Activated naive CD4-positive, alpha-beta T cell treated with anti-CD3 and anti-CD28 coated beads, Interleukin-2, amount 10 ng/mL, durations not matched to agents 7 days and 5 days (primary cell): ENCODE measurements at regions of chr15 and their contacts with region 1.

Region 1: DNA sequence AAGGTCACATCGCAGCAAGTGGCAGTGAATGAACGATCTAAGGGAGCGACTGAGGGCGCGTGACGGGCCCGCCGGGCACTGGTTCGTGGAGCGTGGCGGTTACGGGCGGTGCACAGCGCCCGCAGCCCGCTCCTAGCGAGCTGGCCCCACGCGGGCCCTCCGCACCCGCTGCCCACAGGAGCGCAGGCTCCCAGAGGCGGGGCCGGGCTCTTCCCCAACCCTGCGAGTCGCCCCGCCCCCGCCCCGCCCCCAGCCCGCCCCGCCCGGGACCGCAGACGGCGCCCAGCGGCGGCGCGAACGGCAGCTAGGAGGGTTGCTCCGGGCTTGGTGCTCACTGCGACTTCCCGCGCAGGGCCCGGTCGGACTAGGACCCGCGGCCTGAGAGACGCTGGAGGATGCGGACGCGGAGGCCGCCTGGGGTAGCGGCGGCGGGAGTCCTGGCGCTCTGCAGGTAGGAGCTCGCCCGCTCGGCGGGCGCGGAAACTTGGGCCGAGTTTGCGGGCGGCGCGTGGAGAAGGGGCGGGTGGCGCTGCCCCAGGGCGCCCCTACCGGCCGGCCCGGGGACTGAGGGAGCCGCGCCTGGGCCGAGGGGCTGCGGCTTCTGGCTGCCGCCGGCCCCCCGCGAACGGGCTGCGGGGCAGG is at the start of gene C15orf39:
- DNase-seq: peak; percentile 80
- H3K4me3 Mint-ChIP-seq: peak within 1 kb of the TSS; percentile 90
- H3K27ac Mint-ChIP-seq: peak within 1 kb of the TSS; percentile 95
- H3K4me1 Mint-ChIP-seq: peaks cover 59% of the 10 kb centered on the region
- H3K27me3 Mint-ChIP-seq: peaks cover 4% of the 10 kb centered on the region

Region 2: DNA sequence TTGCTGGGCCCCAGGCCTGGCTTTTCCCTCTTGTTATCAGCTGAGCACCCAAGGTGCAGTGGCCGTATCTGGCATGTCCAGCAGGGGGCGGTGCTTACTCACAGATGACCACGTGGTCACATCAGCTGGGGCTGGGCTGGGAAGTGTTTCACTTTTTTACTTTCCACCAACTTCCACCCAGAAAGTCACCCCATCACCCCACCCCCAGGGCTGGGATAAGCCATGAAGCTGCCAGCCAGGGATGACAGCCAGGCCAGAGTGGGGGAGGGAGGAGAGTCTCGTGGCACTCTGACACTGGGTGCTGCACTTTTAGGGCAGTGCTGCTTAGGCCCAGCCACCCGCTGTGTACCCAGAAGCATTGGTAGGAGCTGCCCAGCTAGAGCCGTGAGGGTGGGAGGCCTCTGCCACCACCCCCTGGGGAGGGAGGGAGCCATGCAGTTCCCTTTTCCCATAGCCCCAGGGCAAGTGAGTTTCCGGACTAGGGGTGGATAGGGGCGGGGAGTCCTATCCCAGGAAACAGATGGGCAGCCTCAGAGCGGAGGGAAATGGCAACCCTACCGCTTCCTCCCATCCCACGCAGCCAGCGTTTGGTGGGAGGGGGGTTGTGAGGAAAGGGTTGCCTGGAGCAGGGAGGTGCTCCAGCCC is 172.2 kb before region 1 on chr15:
- CTCF ChIA-PET with region 1: interaction called, 109 read pairs
- DNase-seq: peak; percentile 94
- H3K4me3 Mint-ChIP-seq: no peak overlapping the region
- H3K27ac Mint-ChIP-seq: peak overlapping the region; percentile 83
- H3K4me1 Mint-ChIP-seq: peaks cover 42% of the 10 kb centered on the region
- H3K27me3 Mint-ChIP-seq: no peaks in the 10 kb centered on the region

Region 3: GRCh38 chr15:75036314-75036649 is 165.4 kb before region 1 on chr15:
- CTCF ChIA-PET with region 1: interaction called, 109 read pairs
- DNase-seq: no peak
- H3K4me3 Mint-ChIP-seq: no peak overlapping the region
- H3K27ac Mint-ChIP-seq: no peak overlapping the region
- H3K4me1 Mint-ChIP-seq: peaks cover 42% of the 10 kb centered on the region
- H3K27me3 Mint-ChIP-seq: no peaks in the 10 kb centered on the region

Region 4: DNA sequence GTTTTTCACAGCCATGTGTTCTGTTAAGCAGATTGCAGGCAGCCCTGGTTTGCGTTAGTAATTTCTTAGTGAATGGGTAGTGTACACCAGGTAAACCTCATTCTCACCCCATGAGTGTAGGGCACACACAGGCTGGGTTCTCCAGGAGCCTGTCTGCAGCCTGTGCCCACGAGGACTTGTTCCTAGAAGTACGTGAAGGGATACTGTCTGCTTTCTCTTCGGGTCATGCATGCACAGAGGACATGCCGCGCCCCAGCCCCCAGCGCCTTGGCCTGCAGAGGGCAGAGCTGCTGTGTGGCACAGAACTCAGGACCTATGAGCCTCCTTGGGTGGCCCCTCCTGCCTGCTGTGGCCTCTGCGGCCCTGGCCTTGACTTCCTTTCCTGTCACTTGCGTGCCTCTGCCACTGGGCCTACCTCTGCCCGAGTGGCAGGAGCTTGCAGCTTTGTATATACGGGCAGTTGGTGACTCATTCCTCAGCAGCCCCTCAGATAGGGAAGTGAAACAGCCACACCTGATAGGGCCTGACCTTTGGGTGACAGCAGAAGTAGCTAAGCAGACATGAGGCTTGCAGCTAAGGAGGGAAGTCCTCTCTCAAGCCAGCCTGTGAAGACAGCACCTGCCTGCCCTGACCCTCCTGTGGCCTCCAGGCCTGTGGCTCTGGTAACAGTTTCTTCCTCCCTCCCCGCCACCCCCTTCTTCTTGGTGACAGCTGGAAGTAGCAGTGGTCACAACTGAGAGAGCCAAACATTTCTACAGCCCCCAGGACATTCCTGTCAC is 158.8 kb before region 1 on chr15:
- CTCF ChIA-PET with region 1: interaction called, 66 read pairs
- DNase-seq: peak; percentile 84
- H3K4me3 Mint-ChIP-seq: no peak overlapping the region
- H3K27ac Mint-ChIP-seq: peak overlapping the region; percentile 85
- H3K4me1 Mint-ChIP-seq: peaks cover 66% of the 10 kb centered on the region
- H3K27me3 Mint-ChIP-seq: no peaks in the 10 kb centered on the region

Region 5: DNA sequence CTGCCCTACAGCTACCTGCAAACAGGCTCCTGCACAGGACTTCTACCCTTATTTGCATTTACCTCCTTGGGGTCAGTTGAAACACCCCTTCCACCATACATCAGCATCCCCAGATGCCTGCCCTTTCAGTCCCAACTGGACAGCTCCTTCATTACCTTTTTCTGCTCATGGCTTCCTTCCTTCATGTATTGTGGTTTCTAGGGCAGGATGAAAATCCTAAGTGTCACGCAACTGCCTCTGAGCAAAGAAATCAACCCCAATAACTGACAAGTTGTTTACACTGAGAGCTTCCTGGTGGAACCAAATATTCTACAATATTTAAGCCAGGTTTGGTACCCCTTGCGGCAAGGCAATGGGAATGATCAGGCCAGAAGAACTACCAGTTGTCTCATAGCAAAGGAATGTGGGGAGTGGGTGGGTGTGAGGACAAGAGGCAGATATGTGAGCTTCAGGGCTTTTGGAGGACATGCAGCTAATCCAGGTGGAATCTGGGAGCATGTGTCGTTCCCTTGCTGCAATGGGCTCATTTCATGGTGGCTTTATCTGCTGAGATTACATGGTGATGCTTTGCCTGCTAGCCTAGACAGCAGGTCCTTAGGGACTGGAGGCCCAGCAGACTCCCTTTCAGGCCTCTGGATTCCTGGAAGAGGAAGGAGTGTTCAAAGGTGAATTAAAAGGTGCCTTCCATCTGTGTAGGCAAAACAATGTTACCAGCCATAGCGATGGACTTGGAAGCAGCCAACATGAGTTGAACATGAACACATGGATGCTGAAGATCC is 143.4 kb before region 1 on chr15:
- CTCF ChIA-PET with region 1: interaction called, 10 read pairs
- DNase-seq: no peak
- H3K4me3 Mint-ChIP-seq: no peak overlapping the region
- H3K27ac Mint-ChIP-seq: no peak overlapping the region
- H3K4me1 Mint-ChIP-seq: peaks cover 21% of the 10 kb centered on the region
- H3K27me3 Mint-ChIP-seq: no peaks in the 10 kb centered on the region

Region 6: GRCh38 chr15:75107908-75108838 is 93.6 kb before region 1 on chr15:
- CTCF ChIA-PET with region 1: interaction called, 10 read pairs
- DNase-seq: peak; percentile 73
- H3K4me3 Mint-ChIP-seq: peak overlapping the region; percentile 16
- H3K27ac Mint-ChIP-seq: peak overlapping the region; percentile 71
- H3K4me1 Mint-ChIP-seq: peaks cover 46% of the 10 kb centered on the region
- H3K27me3 Mint-ChIP-seq: peaks cover 56% of the 10 kb centered on the region

Region 7: GRCh38 chr15:75224281-75224680 is 22.6 kb after region 1 on chr15:
- CTCF ChIA-PET with region 1: no interaction called
- DNase-seq: no peak
- H3K4me3 Mint-ChIP-seq: no peak overlapping the region
- H3K27ac Mint-ChIP-seq: no peak overlapping the region
- H3K4me1 Mint-ChIP-seq: no peaks in the 10 kb centered on the region
- H3K27me3 Mint-ChIP-seq: peaks cover 29% of the 10 kb centered on the region

Region 8: GRCh38 chr15:75302318-75302717 is 100.6 kb after region 1 on chr15:
- CTCF ChIA-PET with region 1: no interaction called
- DNase-seq: no peak
- H3K4me3 Mint-ChIP-seq: no peak overlapping the region
- H3K27ac Mint-ChIP-seq: no peak overlapping the region
- H3K4me1 Mint-ChIP-seq: peaks cover 11% of the 10 kb centered on the region
- H3K27me3 Mint-ChIP-seq: peaks cover 38% of the 10 kb centered on the region

Region 9: GRCh38 chr15:76267077-76267476 is 1065.3 kb after region 1 on chr15:
- CTCF ChIA-PET with region 1: no interaction called
- DNase-seq: no peak
- H3K4me3 Mint-ChIP-seq: no peak overlapping the region
- H3K27ac Mint-ChIP-seq: no peak overlapping the region
- H3K4me1 Mint-ChIP-seq: peaks cover 12% of the 10 kb centered on the region
- H3K27me3 Mint-ChIP-seq: no peaks in the 10 kb centered on the region